Posterior cingulate gyrus (tissue), 11 donors: ENCODE measurements at regions of chr12 and their contacts with region 1.

Region 1: GRCh38 chr12:26853303-26854030 is 20.5 kb upstream of the ITPR2 start:
- DNase-seq: peak; percentile 40 to 96 (median 68)

Region 2: GRCh38 chr12:26691234-26691970 is 162.1 kb before region 1 on chr12:
- intact Hi-C with region 1: no loop called
- DNase-seq: peak in 6 of 10 donors; percentile 6 to 81 (median 43)

Region 3: DNA sequence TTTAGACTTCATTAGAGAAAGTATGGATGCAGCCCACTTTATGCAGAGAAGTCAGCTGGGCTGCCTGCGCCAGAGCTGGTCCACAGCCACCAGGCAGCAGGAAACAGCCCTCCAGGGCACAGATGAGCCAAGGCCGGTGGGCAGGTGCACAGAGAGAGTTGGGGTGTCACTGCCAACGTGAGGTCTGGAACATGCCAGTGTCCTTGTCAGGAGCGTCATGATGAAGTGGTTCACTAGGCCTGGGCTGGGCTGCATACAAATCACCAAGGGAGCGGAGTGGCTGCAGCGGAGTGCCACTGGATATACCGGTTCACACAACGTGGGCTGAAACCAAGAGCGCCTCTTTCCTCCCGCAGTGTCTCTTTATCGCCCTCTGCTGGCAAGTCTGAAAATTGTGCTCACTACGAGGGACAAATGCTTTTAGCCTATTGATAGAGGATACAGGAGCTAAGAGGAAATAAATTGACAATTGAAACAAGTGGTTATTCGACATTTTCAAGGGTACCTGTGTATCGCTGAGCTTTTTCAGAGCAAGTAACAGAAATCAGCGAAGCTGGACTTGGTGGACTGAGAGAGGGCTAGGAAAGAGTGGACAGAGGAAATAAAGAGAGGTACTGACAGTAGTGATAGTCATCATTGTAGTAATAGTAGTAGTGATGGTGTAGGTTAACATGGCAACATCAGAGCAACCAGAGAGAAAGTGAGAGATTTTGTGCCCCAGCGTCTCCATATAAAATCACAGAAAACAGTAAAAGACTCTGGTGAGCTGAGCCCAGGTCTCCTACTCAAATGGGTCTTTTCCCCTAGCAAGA is 31.5 kb after region 1 on chr12:
- intact Hi-C with region 1: loop called (anchors 2 kb)
- DNase-seq: peak; percentile 52 to 95 (median 84)

Region 4: DNA sequence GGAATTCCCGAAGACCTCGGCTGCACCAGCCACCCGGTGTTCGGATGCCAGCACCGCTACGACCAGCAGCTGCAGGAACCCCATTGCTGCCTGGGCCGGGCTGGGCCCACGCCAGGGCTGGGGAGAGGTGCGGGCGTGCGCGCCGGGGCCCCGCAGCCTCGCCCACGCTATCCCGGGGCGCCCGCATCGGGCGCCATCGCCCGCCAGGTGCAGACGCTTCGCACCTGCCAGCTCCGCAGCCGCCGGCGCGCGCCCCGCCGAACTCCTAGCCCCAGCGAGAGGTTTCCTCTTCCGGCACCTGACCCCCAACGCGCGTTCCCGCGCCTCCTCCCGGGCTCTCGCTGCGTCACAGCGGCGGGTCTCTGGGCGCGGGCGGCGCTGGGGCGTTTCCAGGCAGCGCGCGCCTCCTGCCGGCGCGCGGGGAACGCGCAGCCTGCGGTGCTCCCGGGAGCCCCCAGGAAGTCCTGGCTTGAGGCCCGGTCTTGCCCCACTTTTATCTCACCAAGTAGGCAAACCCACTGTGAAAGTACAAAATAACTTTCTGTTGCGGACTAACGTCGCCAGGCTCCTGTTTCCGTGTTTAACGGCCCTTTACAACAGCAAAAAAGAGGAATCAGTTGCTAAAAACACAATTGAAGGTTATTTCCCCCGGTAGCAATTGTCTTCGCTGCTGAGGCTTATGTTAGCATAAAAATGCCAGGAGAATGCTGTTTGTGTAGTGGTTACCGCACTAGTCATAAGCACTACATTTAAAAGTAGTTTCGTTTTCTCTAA is 160.8 kb after region 1 on chr12 and contains the start of gene TM7SF3:
- intact Hi-C with region 1: loop called (anchors 1 kb)
- DNase-seq: peak; percentile 77 to 98 (median 90)

Region 5: GRCh38 chr12:27305673-27306456 is 452.4 kb after region 1 on chr12:
- intact Hi-C with region 1: loop called (anchors 1 kb)
- DNase-seq: no peak